GM12878 (cell line): ENCODE measurements at regions of chr11 and their contacts with region 1.

Region 1: DNA sequence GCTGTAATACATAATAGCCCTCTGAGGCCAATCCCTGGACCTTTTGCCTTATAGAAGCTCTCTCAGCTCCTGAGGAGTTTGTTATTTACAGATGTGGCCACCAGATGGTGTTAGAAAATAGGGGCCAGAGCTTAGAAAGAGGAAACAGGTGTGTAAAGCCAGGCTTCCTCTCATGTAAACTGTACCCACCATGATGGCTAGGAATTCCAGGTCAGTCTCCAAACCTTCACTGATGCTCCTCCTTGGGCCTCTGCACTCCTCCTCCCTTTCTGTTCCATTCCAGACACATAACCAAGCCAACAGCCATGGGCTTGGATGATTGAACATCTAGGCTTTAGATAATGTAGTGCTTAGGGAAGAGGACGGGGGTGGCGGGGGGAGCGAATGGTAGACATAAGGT is 39.7 kb downstream of the USP35 start:
- DNase-seq: peak; percentile 51
- ATAC-seq: peak; percentile 88
- H3K4me3 ChIP-seq: no peak overlapping the region
- H3K27ac ChIP-seq: peak overlapping the region; percentile 75
- H3K4me1 ChIP-seq: peaks cover 37% of the 10 kb centered on the region
- H3K27me3 ChIP-seq: no peaks in the 10 kb centered on the region
- CTCF ChIP-seq: peak; percentile 52 to 69 (median 64); a peak in 5 of 6 replicates
- EP300 ChIP-seq: no peak
- POLR2A ChIP-seq: no peak
- RAD21 ChIP-seq: peak; percentile 99

Region 2: GRCh38 chr11:78188286-78189173 is 39.9 kb before region 1 on chr11 and contains the starts of genes KCTD21 and USP35:
- CTCF ChIA-PET with region 1: interaction called, 13 read pairs
- POLR2A ChIA-PET with region 1: interaction called, 3 read pairs
- RAD21 ChIA-PET with region 1: interaction called, 6 read pairs
- SMC1A ChIA-PET with region 1: interaction called, 3 read pairs
- in situ Hi-C with region 1: no loop called
- intact Hi-C with region 1: loop called (anchors 2 kb)
- DNase-seq: peak; percentile 85
- ATAC-seq: peak; percentile 98
- H3K4me3 ChIP-seq: peak within 1 kb of the TSS; percentile 82
- H3K27ac ChIP-seq: 0 out of 2 replicates have a peak within 1 kb of the TSS, but pooled peaks have one; percentile 7
- H3K4me1 ChIP-seq: peaks cover 14% of the 10 kb centered on the region
- H3K27me3 ChIP-seq: no peaks in the 10 kb centered on the region
- CTCF ChIP-seq: no peak
- EP300 ChIP-seq: no peak
- POLR2A ChIP-seq: peak; percentile 80
- RAD21 ChIP-seq: no peak
- polyA plus RNA-seq, gene KCTD21: 0.63 to 0.73 TPM
- polyA plus RNA-seq, gene USP35: 0.13 TPM in 1 of 2 experiments, not detected in the other

Region 3: GRCh38 chr11:78310500-78310909 is 82.0 kb after region 1 on chr11:
- CTCF ChIA-PET with region 1: interaction called, 5 read pairs
- POLR2A ChIA-PET with region 1: interaction called, 5 read pairs
- RAD21 ChIA-PET with region 1: interaction called, 14 read pairs
- SMC1A ChIA-PET with region 1: interaction called, 9 read pairs
- in situ Hi-C with region 1: no loop called
- intact Hi-C with region 1: no loop called
- DNase-seq: peak; percentile 88
- ATAC-seq: peak; percentile 91
- H3K4me3 ChIP-seq: peak overlapping the region; percentile 2; the same call in 1 of the 2 replicates
- H3K27ac ChIP-seq: peak overlapping the region; percentile 50
- H3K4me1 ChIP-seq: peaks cover 46% of the 10 kb centered on the region
- H3K27me3 ChIP-seq: no peaks in the 10 kb centered on the region
- CTCF ChIP-seq: no peak
- EP300 ChIP-seq: no peak
- POLR2A ChIP-seq: no peak
- RAD21 ChIP-seq: peak; percentile 16; the same call in 1 of the 2 replicates

Region 4: DNA sequence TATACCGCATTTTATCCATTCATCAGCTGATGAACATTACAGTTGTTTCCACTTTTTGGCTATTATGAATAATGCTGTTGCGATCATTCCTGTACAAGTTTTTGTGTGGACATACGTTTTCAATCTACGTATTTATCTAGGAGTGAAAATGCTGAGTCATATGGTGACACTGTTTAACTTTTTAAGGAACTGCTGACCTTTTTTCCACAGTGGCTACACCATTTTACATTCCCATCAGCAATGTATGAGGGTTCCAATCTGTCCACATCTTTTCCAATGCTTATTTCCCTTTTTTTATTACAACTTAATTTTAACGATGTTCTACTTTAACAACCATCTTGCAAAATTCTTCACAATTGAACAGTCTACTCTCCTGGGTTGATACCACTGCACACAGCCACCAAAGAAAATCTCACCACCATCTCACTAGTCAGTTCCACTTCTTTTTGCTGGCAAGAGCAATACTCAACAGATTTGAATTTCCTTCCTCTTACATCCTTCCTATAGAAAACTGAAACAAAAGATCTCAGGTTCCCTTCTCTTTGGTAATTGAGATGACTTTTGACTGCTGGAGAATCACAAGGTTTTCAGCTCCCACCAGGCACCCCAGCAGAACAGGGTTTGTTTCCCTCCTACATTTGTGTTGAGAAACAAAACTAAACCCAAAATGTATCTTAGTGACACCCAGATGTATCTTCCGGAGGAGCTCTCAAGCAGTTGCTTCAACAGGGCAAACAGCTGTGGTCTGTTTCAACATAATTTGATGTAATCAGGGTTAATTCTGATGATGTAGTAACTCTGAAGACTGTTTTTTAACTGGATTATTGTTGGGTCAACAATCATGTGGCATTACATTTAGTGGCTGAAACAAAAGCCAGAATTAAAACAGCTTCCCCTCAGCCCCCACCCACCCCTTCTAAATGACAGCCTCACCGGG is 196.1 kb after region 1 on chr11:
- CTCF ChIA-PET with region 1: interaction called, 58 read pairs
- POLR2A ChIA-PET with region 1: no interaction called
- RAD21 ChIA-PET with region 1: interaction called, 36 read pairs
- SMC1A ChIA-PET with region 1: interaction called, 12 read pairs
- in situ Hi-C with region 1: no loop called
- intact Hi-C with region 1: no loop called
- DNase-seq: peak; percentile 70
- ATAC-seq: peak; percentile 12
- H3K4me3 ChIP-seq: peak overlapping the region; percentile 18; the same call in 1 of the 2 replicates
- H3K27ac ChIP-seq: peak overlapping the region; percentile 73
- H3K4me1 ChIP-seq: peaks cover 66% of the 10 kb centered on the region
- H3K27me3 ChIP-seq: no peaks in the 10 kb centered on the region
- CTCF ChIP-seq: no peak
- EP300 ChIP-seq: no peak
- POLR2A ChIP-seq: no peak
- RAD21 ChIP-seq: no peak

Region 5: DNA sequence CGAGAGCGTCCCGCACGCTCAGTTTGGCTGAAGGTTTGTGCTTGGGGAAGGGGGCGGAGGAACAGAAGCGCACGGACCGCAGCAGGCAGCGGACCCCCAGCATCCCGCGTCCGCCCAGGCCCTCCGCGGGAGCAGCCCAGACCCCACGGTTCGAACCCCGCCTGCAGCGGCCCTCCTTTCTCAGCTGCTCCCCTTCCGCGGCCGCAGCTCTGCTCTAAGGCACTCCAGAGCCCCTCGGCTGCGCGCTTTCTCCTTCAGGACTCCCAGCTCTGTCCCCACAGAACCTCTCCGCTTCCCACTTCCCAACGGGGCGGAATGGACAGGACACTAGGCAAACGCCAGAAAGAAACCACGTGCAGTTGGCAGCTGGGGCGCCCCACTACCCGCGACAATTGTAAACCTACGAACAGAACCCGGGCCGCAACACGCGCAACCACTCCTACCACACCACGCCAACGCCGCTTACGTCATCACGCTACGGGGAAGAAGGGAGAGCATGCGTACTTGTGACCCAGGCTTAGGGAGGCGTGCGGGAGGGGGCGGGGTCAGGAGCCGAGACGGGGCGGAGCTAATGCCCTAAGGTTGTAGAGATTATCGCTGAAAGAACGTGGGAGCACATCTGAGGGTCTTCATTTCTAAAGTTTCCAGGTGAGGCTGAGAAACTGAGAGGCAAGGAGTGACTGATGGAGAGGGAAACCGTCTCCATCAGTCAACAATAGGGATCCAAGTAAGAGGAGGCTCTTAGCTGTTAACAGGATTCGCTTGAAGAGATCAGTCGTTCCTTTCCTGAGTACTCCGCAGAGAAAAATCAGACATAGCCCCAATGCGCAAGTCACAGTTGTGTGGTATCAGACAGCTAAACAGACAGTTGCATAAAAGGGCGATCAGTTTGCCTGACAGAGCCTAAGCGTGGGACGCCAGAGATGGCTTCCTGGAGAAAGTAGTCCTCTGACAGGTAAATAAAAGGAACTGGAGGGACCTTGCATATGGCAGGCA is 346.2 kb after region 1 on chr11 and contains the start of gene NARS2:
- CTCF ChIA-PET with region 1: interaction called, 17 read pairs
- POLR2A ChIA-PET with region 1: interaction called, 6 read pairs
- RAD21 ChIA-PET with region 1: interaction called, 5 read pairs
- SMC1A ChIA-PET with region 1: interaction called, 11 read pairs
- in situ Hi-C with region 1: no loop called
- intact Hi-C with region 1: no loop called
- DNase-seq: peak; percentile 95
- ATAC-seq: peak; percentile 96
- H3K4me3 ChIP-seq: peak within 1 kb of the TSS; percentile 82
- H3K27ac ChIP-seq: peak within 1 kb of the TSS; percentile 79
- H3K4me1 ChIP-seq: no peaks in the 10 kb centered on the region
- H3K27me3 ChIP-seq: no peaks in the 10 kb centered on the region
- CTCF ChIP-seq: no peak
- EP300 ChIP-seq: no peak
- POLR2A ChIP-seq: peak; percentile 89
- RAD21 ChIP-seq: no peak
- polyA plus RNA-seq, gene NARS2: 41.3 to 42.0 TPM

Region 6: DNA sequence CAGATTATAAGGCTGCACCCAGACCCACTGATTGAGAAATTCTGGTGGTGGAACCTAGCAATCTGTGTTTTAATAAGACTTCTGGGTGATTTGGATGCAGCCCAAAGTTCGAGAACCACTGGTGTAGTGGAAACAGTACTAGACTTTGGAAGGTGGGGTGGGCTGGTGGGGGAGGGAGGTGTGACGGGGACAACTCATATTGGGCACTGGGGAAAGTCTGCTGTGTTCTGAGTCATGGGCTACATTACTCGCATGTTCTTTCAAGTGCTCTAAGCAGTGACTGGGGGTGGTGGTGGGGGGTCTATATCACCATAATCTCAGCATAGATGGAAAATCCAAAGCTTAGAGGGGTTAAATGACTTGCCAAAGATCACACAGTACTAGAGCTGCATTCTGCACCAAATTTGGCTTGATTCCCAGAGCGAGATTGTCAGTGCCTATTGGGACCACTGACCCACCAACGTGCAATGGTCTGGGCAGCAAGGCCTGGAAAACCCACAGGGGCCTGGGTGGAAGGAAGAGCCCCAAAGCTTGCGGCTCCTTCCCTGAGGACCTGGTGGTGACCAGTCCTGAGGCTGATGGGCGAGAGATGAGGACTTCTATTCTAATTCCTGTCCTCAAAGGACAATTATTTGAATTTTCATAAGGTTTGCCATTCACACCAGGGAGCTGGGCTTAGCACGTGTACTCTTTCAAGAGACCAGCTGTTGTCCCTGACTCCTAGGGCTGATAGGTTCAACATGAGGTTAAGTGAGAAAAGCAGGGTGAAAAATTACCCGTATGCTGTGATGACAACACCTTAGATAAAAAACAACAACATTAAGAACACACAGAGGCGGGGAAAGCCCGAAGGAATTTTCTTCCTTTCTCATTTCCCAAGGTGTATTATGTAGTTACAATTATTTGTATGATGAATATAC is 423.7 kb after region 1 on chr11:
- CTCF ChIA-PET with region 1: no interaction called
- POLR2A ChIA-PET with region 1: no interaction called
- RAD21 ChIA-PET with region 1: no interaction called
- SMC1A ChIA-PET with region 1: no interaction called
- in situ Hi-C with region 1: no loop called
- intact Hi-C with region 1: no loop called
- DNase-seq: no peak
- ATAC-seq: no peak
- H3K4me3 ChIP-seq: no peak overlapping the region
- H3K27ac ChIP-seq: no peak overlapping the region
- H3K4me1 ChIP-seq: no peaks in the 10 kb centered on the region
- H3K27me3 ChIP-seq: no peaks in the 10 kb centered on the region; a peak in 2 of 4 replicates
- CTCF ChIP-seq: no peak
- EP300 ChIP-seq: no peak
- POLR2A ChIP-seq: no peak
- RAD21 ChIP-seq: no peak